GM18951 (cell line): ENCODE measurements at regions of chr6 and their contacts with region 1.

Region 1: GRCh38 chr6:89432875-89433251 is at the start of gene ANKRD6:
- POLR2A ChIP-seq: no peak

Region 2: GRCh38 chr6:88796980-88797379 is 635.9 kb before region 1 on chr6:
- in situ Hi-C with region 1: no loop called
- POLR2A ChIP-seq: no peak

Region 3: GRCh38 chr6:88813045-88813444 is 619.8 kb before region 1 on chr6:
- in situ Hi-C with region 1: no loop called
- POLR2A ChIP-seq: no peak

Region 4: DNA sequence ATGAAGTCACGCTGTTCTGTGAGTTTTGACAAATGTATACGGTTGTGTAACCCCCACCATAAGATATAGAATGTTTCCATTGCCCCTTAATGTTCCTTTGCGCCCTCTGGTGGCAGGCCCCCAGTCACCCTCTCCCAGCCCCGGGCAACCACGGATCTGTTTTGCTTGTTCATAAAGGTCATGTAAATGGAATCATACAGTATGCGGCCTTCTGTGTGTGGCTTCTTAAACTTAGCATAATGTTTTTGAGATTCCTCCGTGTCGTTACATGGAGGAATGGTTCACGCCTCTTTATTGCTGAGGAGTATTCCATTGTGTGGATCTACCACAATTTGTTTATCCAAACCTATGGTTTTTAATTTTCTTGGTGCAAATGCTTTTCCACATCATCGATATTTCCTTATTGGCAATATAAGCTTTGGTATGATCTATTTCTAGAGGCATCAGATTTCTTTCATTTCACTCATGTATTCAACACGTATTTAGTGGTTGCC is 177.3 kb after region 1 on chr6:
- in situ Hi-C with region 1: loop called (anchors 10 kb)
- POLR2A ChIP-seq: no peak